ENCODE measurements at regions of chr2 and their contacts with region 1.

Region 1: GRCh38 chr2:8761529-8762164 is 75.8 kb downstream of the KIDINS220 start:
- DNase-seq: no peak
- H3K4me3 ChIP-seq: no peak overlapping the region
- H3K27ac ChIP-seq: no peak overlapping the region
- H3K4me1 ChIP-seq: no peaks in the 10 kb centered on the region
- H3K27me3 ChIP-seq: no peaks in the 10 kb centered on the region
- CTCF ChIP-seq: peak; percentile 34 to 65 (median 39)

Region 2: DNA sequence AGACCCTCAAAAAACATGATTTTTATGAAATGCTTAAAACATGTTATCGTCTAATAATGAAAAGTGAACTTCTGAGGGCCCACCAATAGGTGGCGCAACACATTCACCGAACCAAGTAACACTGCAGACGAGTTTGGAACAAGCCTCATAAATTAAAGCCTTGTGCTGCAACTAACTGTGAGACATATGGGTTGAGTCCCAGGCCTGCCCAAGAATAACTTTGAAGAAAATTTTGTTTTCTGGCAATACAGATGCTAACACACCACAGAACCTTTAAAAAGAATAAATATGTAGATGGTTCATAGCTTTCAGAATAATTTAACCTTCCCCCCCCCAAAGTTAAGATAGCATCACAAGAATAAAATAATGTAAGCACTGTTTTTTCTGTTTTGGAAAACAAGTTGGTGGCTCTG is 1558.6 kb before region 1 on chr2:
- intact Hi-C with region 1: loop called (anchors 5 kb)
- DNase-seq: no peak
- H3K4me3 ChIP-seq: no peak overlapping the region
- H3K27ac ChIP-seq: no peak overlapping the region
- H3K4me1 ChIP-seq: no peaks in the 10 kb centered on the region
- H3K27me3 ChIP-seq: no peaks in the 10 kb centered on the region
- CTCF ChIP-seq: peak; percentile 60 to 89 (median 85)

Region 3: DNA sequence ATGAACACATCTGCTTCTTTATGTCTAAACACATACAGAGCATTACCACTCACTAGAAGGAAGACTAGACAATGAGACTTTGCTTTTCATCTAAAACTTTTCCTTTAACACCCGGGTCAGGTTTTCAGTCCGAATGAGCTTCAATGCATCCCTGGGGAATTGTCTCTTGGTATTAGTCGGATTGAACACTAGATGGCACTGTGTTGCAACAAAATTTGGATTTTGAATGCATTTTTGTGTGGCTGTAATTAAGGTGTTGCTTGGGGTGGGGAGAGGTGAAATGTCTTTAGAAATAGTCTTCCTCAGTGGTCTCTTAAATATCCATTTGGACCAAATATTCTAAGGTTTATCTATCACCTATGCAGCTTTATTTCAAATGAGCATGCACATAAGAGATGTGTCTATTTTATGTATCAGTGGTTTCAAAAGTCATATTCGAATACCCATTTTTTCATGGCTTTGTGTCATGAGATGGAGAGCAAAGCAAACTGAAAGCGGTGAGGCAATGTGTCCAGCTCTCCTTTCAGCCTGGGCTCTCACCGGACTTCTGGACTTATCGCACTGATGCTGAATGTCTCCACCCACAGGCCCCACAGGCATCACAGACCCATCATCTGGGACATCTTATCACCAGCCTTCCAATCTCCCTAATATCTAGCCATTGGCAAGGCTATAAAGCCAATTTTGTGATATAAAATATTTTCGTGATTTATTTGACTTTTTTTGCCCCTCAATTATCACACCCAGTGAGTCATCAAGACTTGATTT is 1334.2 kb before region 1 on chr2:
- intact Hi-C with region 1: loop called (anchors 2 kb)
- DNase-seq: no peak
- H3K4me3 ChIP-seq: no peak overlapping the region
- H3K27ac ChIP-seq: no peak overlapping the region
- H3K4me1 ChIP-seq: peaks cover 0 to 2% of the 10 kb centered on the region in 2 donors
- H3K27me3 ChIP-seq: no peaks in the 10 kb centered on the region
- CTCF ChIP-seq: peak; percentile 55 to 80 (median 61)

Region 4: DNA sequence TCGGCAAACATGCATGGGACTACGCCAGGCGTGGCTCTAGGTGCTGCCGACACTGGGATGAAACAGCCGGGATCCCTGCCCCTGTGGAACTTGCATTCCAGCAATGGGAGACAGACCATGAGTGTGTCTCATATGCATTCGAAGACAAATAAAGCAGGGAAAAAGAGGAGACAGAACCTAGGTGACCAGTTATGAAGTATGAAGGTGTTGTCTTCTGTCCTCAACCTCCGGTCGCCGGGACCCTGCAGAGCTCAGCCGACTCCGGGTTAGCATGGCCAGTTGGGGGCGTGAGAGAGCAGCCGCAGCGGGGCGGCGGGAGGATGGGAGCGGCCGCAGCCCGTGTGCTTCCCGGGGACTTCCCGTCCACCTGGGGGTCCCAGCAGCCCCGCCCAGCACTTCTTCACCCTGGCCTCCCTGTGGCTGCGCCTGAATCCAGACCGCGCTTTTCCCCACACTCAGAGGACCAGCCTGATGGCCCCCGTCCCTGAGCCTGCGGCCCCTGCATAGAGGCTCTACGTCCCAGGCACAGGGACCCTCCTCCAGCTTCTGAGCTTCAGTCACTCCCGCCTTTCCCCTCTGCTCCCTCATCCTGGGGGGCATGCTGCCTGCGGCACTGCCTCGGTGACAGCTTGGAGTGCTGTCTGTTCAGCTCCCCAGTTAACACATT is 68.4 kb before region 1 on chr2:
- intact Hi-C with region 1: loop called (anchors 2 kb)
- DNase-seq: no peak
- H3K4me3 ChIP-seq: peak overlapping the region; percentile 3 to 46
- H3K27ac ChIP-seq: no peak overlapping the region
- H3K4me1 ChIP-seq: no peaks in the 10 kb centered on the region
- H3K27me3 ChIP-seq: no peaks in the 10 kb centered on the region
- CTCF ChIP-seq: peak; percentile 37 to 71 (median 38)

Region 5: GRCh38 chr2:8803658-8804379 is 42.2 kb after region 1 on chr2:
- intact Hi-C with region 1: no loop called
- DNase-seq: no peak
- H3K4me3 ChIP-seq: no peak overlapping the region
- H3K27ac ChIP-seq: no peak overlapping the region
- H3K4me1 ChIP-seq: peaks cover 0 to 5% of the 10 kb centered on the region in 2 donors
- H3K27me3 ChIP-seq: no peaks in the 10 kb centered on the region
- CTCF ChIP-seq: no peak

Measured in ascending aorta (tissue), 2 donors.